Psoas muscle (tissue), 8 donors: ENCODE measurements at regions of chr12 and their contacts with region 1.

Region 1: GRCh38 chr12:94762259-94762942 is 112.0 kb upstream of the TMCC3 start:
- DNase-seq: no peak
- ATAC-seq: no peak
- H3K4me3 ChIP-seq: no peak overlapping the region
- H3K27ac ChIP-seq: no peak overlapping the region
- H3K4me1 ChIP-seq: no peaks in the 10 kb centered on the region
- H3K27me3 ChIP-seq: no peaks in the 10 kb centered on the region
- CTCF ChIP-seq: no peak

Region 2: GRCh38 chr12:94133964-94134795 is 628.2 kb before region 1 on chr12:
- intact Hi-C with region 1: loop called in 1 of 2 experiments (anchors 10 kb)
- DNase-seq: no peak
- ATAC-seq: peak; percentile 76 to 88 (median 82)
- H3K4me3 ChIP-seq: no peak overlapping the region
- H3K27ac ChIP-seq: no peak overlapping the region
- H3K4me1 ChIP-seq: no peaks in the 10 kb centered on the region
- H3K27me3 ChIP-seq: peaks cover 0 to 4% (median 1%) of the 10 kb centered on the region in 3 donors
- CTCF ChIP-seq: peak; percentile 85

Region 3: DNA sequence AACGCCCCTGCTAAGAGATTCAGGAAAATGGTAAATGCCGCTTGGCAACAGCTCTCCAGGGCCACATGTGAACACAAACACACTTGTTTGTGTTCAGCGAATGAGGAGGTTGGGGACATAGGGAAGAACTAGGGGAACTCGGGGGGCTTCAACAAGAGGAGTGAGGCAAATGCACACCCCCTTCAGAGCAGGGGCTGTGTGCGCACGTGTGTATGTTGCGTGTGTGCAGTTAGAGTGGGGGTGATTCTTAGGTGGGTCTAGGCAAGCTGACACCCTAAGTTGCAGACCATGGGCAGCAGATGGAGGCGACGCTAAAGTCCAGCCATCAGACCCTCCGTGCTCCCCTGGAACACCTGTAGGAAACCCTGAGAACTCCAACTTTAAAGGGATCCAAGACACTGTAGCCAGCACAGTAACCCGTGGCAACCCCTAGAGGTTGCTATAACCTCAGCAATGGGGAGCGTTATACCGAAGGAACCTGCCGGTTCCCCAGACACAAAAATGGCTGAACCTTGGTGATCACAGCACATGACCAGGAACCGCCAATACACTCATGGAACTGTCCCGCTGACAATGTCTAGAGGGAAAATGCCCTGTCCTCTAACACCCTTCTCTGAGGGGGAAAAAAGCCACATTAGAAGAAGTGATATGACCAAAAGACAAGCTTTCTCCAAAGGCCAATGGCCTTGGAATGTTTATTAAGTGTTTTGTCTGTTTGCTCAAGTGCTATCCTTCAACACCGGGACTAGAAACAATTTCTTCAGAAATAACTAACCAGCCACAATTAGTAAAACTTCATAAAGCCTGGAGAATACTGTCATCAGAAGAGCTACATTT is 216.2 kb before region 1 on chr12:
- intact Hi-C with region 1: loop called (anchors 2 to 5 kb)
- DNase-seq: no peak
- ATAC-seq: peak; percentile 92 to 96 (median 94)
- H3K4me3 ChIP-seq: no peak overlapping the region
- H3K27ac ChIP-seq: no peak overlapping the region
- H3K4me1 ChIP-seq: no peaks in the 10 kb centered on the region
- H3K27me3 ChIP-seq: no peaks in the 10 kb centered on the region
- CTCF ChIP-seq: peak; percentile 84

Region 4: DNA sequence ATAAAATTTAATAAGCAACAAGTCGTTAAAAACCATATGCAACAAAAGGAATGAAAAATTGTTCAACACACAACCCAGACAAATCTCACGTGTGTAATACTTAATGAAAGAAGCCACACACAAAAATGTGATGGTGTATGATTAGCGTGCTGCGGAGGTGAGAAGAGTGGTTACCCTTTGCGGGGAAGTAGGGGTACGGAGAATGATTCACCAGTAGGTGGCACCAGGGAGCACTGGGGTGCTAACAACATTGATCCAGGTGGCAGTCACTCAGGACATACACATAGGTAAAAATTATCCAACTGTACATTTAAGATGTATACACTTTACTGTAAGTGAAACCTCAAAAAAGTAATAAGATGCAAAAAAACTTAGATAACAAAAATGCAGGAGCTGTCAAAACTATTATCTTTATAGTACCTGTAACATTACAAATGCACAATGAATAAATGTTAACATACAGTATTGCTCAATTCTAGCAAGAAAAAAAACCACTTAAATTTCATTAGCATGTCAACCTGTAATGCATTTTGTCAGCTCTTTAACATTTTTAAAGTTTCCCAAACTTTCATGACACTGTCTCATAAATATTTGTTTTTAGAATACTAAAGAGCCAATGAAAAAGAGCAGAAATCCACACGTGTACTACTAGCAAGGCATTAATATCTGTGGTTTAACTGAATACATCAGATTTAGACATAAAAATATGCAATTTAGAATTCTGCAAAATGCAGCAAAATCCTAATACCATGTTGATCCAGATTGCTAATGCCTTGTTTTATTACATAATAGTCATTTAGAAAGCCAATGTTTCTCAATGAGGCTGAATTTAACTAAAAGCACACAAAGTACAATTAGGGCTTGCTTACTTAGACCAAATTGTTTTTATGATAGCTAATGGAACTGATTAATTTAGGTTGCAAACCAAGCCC is 158.7 kb before region 1 on chr12:
- intact Hi-C with region 1: loop called (anchors 5 kb)
- DNase-seq: no peak
- ATAC-seq: peak; percentile 49 to 79 (median 64)
- H3K4me3 ChIP-seq: no peak overlapping the region
- H3K27ac ChIP-seq: peak overlapping the region; percentile 7
- H3K4me1 ChIP-seq: peaks cover 25% of the 10 kb centered on the region
- H3K27me3 ChIP-seq: no peaks in the 10 kb centered on the region
- CTCF ChIP-seq: peak; percentile 62

Region 5: DNA sequence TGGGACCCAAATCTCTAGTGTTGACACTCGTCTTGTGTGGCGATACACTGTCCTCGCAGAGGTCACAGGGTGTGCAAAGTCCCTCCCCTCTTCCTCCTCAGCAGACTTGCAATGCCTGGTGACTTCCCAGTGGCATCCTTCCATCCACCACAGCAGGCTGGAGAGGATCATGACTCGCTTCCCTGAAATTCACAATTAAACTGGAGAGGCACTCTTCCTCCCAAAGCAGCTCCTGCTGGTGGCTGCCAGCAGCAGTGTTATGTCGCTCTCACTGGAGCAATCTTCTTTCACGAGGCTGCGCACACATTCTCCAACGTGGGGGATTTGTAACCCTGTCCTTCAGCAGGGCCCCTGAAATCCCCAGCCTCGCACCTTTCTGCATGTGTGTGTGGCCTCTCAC is 33.1 kb after region 1 on chr12:
- intact Hi-C with region 1: no loop called
- DNase-seq: peak in 1 of 2 donors; percentile 54
- ATAC-seq: peak in 1 of 4 donors; percentile 27
- H3K4me3 ChIP-seq: no peak overlapping the region
- H3K27ac ChIP-seq: no peak overlapping the region
- H3K4me1 ChIP-seq: no peaks in the 10 kb centered on the region
- H3K27me3 ChIP-seq: no peaks in the 10 kb centered on the region
- CTCF ChIP-seq: no peak